Transverse colon (tissue), 4 donors: ENCODE measurements at regions of chr12 and their contacts with region 1.

Region 1: GRCh38 chr12:94532490-94533422 is 73.1 kb upstream of the CEP83 start:
- DNase-seq: peak; percentile 69
- H3K4me3 ChIP-seq: no peak overlapping the region
- H3K27ac ChIP-seq: no peak overlapping the region
- H3K4me1 ChIP-seq: peaks cover 0 to 4% (median 0%) of the 10 kb centered on the region in 4 donors
- H3K27me3 ChIP-seq: no peaks in the 10 kb centered on the region
- CTCF ChIP-seq: peak; percentile 74 to 83 (median 79)
- EP300 ChIP-seq: no peak
- POLR2A ChIP-seq: no peak

Region 2: DNA sequence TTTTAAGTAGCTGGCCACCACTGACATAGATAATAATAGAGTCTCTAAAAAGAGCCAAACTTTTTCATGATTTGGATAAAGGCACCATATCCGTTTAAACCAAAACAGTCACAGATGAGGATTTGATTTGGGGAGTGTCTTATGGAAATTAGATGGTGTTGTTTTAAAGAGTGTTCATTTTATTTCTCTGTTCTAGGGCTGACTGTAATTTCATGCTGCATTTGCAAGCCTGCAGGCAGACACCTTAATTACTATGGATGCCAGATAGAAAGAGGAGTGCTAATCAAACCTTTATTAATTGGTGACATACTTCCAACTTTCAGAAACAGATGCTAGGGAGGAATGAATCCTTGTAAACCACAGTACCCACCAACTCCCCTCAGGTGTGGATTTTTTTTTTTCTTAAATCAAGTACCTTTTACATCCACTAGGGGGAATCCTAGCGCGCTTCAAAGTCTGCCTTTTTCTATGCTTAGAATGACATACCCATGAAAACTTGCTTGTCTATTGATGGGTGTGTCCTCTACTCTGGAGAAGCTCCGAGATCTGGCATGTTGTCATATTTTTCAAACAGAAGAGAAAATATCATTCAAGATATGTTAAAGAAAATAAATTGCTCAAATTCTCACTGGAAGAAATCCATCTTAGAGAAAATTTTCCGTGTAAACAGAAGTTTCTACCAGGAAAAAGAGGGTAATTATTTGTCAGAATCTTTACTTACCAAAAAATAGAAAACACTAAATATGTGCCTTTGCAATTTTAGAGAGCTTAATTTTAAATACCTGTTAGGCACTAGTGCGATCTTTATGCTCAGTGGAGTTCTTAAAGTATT is 398.6 kb before region 1 on chr12:
- in situ Hi-C with region 1: loop called (anchors 5 to 10 kb)
- intact Hi-C with region 1: loop called (anchors 5 kb)
- DNase-seq: no peak
- H3K4me3 ChIP-seq: no peak overlapping the region
- H3K27ac ChIP-seq: no peak overlapping the region
- H3K4me1 ChIP-seq: peaks cover 0 to 4% (median 0%) of the 10 kb centered on the region in 4 donors
- H3K27me3 ChIP-seq: peaks cover 5% of the 10 kb centered on the region
- CTCF ChIP-seq: peak; percentile 77 to 88 (median 81)
- EP300 ChIP-seq: no peak
- POLR2A ChIP-seq: no peak

Region 3: DNA sequence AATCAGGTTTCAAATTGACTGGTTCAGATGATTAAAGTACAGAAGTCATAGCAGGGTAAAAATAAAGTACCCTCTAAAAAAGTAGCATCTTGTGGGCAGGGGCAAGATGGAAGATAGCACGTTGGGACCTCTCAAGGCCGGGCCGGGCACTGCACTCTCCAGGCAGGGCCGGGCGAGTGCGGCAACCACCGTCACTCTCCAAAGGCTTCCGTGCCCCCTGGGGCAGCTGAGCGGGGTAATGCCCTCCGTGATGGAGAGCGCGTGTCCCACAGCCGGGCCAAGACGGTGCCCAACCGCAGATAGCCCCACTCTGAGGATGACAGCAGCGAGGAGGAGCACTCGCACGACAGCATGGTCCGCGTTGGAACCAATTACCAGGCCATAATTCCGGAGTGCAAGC is 392.9 kb before region 1 on chr12:
- in situ Hi-C with region 1: loop called (anchors 5 to 10 kb)
- intact Hi-C with region 1: loop called (anchors 5 kb)
- DNase-seq: no peak
- H3K4me3 ChIP-seq: no peak overlapping the region
- H3K27ac ChIP-seq: no peak overlapping the region
- H3K4me1 ChIP-seq: no peaks in the 10 kb centered on the region
- H3K27me3 ChIP-seq: peaks cover 9% of the 10 kb centered on the region
- CTCF ChIP-seq: no peak
- EP300 ChIP-seq: no peak
- POLR2A ChIP-seq: no peak